A673 (cell line): ENCODE measurements at regions of chr14 and their contacts with region 1.

Region 1: GRCh38 chr14:74754157-74754556 is 9.0 kb upstream of the YLPM1 start:
- DNase-seq: no peak
- H3K4me3 ChIP-seq: no peak overlapping the region
- H3K27ac ChIP-seq: no peak overlapping the region
- H3K4me1 ChIP-seq: no peaks in the 10 kb centered on the region
- H3K27me3 ChIP-seq: no peaks in the 10 kb centered on the region
- CTCF ChIP-seq: no peak

Region 2: DNA sequence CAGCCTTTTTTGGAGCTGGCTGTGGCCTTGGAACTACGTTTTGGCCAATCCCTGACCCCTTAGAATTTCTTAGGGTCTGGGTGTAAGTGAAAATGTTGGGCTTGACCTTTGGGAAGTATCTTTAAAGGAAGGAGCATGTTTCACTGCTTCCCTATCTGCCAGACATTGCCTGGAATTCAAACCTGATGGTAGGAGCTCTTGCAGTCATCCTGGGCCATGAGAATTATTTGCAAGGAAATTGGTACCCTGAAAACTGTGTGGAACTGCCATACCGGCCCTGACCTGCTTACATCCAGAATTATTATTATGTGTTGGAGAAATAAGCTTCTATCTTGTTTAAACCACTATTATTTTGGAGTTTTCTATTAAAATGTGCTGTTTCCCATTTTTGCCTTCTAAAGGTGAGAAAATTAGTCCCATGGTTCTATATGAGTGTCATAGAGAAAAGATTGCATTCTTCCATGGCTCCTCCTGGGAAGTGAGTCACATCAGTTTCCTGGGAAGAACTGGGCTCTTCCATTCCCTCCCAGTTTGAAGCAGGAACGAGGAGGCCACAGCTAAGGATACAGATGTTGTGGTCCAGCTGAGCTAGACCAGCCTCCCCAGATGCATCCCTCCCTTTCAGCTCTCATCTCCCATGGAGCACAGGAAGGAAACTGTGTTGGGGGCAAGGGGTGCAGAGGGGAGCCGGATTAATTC is 210.8 kb after region 1 on chr14:
- CTCF ChIA-PET with region 1: no interaction called
- POLR2A ChIA-PET with region 1: no interaction called
- intact Hi-C with region 1: loop called (anchors 5 kb)
- DNase-seq: peak; percentile 88
- H3K4me3 ChIP-seq: no peak overlapping the region
- H3K27ac ChIP-seq: peak overlapping the region; percentile 5
- H3K4me1 ChIP-seq: no peaks in the 10 kb centered on the region
- H3K27me3 ChIP-seq: no peaks in the 10 kb centered on the region
- CTCF ChIP-seq: no peak

Region 3: GRCh38 chr14:75757644-75758402 is 1003.7 kb after region 1 on chr14:
- CTCF ChIA-PET with region 1: no interaction called
- POLR2A ChIA-PET with region 1: no interaction called
- intact Hi-C with region 1: no loop called
- DNase-seq: no peak
- H3K4me3 ChIP-seq: no peak overlapping the region
- H3K27ac ChIP-seq: no peak overlapping the region
- H3K4me1 ChIP-seq: no peaks in the 10 kb centered on the region
- H3K27me3 ChIP-seq: no peaks in the 10 kb centered on the region
- CTCF ChIP-seq: no peak

Region 4: GRCh38 chr14:76012354-76012753 is 1258.2 kb after region 1 on chr14:
- CTCF ChIA-PET with region 1: no interaction called
- POLR2A ChIA-PET with region 1: no interaction called
- intact Hi-C with region 1: no loop called
- DNase-seq: no peak
- H3K4me3 ChIP-seq: no peak overlapping the region
- H3K27ac ChIP-seq: no peak overlapping the region
- H3K4me1 ChIP-seq: no peaks in the 10 kb centered on the region
- H3K27me3 ChIP-seq: no peaks in the 10 kb centered on the region
- CTCF ChIP-seq: no peak